Pancreas (tissue), 10 donors: ENCODE measurements at regions of chr7 and their contacts with region 1.

Region 1: DNA sequence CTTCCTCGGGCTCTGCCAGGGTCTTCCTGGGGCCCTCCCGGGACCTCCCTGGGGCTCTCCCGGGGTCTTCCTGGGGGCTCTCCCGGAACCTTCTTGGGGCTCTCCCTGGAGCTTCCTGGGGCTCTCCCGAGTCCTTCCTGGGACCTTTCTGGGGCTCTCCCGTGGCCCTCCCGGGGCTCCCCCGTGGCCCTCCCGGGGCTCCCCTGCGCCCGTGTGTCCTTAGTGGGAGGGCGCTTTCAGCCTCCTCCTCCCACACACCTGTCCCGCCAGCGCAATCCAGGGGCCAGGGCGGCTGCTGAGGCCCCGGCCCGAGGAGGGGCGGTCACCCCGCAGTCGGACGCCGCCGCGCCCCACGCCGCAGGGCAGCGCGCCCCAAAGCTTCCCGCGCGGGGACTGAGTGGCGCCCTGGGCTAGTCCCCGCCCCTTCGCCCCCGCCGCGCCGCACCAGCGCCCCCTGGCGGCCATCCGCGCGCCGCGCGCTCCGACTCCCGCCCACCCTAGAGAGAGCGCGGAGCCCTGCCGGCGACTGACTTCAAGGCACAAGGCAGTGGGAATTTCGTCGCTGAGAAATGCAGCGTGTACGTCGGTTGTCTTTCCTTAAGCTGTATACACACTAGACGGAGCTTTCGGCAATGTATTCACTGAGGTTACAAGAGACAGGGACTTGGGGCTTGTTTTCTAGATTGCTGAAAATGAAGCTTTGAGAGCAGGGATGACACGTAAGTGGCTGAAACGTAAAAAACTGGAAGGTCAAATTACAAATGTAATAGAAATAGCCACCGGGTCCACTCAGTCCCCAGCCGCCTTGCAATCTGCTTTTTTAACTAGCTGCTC is 47.1 kb downstream of the INSIG1 start:
- DNase-seq: peak; percentile 67 to 98 (median 84)
- ATAC-seq: peak; percentile 97 to 99 (median 98)
- H3K4me3 ChIP-seq: peak overlapping the region in 3 of 4 donors; percentile 38 to 55 (median 53)
- H3K27ac ChIP-seq: no peak overlapping the region
- H3K4me1 ChIP-seq: no peaks in the 10 kb centered on the region
- H3K27me3 ChIP-seq: no peaks in the 10 kb centered on the region
- CTCF ChIP-seq: peak; percentile 85 to 91 (median 88)

Region 2: DNA sequence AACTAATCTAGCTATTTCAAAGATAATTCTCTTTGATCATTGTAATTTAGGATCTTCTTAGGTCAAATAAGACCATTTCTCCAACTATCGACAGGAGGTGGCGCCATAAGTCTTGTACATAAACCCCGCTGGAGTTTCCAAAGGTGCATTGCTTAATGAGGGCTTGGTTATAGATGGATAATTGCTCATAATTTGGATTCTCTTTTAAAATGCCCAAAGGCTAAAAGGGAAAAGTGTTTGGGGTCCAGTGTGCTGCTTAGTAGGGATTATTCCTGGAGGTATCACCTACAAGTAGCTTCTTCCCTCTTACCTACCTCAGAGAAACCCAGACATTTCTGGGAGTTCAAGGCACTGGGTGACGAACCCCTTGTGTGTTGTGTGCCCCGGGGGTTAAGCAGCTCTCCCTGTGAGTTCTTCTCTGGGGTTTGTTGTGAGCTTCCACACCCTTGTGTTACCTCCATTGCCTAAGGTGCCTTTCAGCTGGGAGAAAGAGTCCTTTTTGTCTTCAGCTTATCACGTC is 417.1 kb before region 1 on chr7:
- intact Hi-C with region 1: loop called in 1 of 3 experiments (anchors 10 kb)
- DNase-seq: peak in 4 of 6 donors; percentile 61 to 80 (median 70)
- ATAC-seq: peak; percentile 82 to 94 (median 89)
- H3K4me3 ChIP-seq: peak overlapping the region; percentile 19 to 70 (median 40)
- H3K27ac ChIP-seq: peak overlapping the region; percentile 72 to 93 (median 80)
- H3K4me1 ChIP-seq: peaks cover 0 to 3% (median 0%) of the 10 kb centered on the region in 3 donors
- H3K27me3 ChIP-seq: no peaks in the 10 kb centered on the region
- CTCF ChIP-seq: peak in 2 of 4 donors; percentile 41 to 45

Region 3: DNA sequence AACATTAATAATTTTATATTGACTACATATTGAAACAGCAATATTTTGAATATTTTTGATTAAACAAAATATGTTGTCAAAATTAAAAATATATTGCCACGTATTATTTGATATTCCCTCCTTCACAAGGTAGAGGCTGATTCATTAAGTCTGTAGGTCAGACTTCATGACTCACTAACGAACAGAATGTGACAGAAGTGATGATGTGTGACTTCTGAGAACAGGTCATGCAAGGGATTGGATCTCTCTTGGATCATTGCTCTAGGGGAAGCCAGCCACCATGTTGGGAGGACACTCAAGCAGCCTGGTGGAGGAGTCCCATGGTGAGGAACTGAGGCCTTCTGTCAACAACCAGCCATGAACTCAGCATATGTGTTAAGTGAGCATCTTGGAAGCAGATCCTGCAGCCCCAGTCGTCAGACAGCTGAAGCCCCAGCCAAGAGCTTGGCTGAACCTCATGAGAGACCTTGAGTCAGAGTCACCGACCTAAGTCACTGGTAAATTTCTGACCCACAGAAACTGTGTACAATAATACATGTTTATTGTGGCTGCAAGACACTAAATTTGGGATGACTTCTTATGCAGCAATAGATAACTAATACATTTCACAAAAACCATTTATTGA is 208.1 kb before region 1 on chr7:
- intact Hi-C with region 1: no loop called
- DNase-seq: no peak
- ATAC-seq: no peak
- H3K4me3 ChIP-seq: no peak overlapping the region
- H3K27ac ChIP-seq: no peak overlapping the region
- H3K4me1 ChIP-seq: no peaks in the 10 kb centered on the region
- H3K27me3 ChIP-seq: no peaks in the 10 kb centered on the region
- CTCF ChIP-seq: no peak

Region 4: GRCh38 chr7:155190688-155191087 is 154.1 kb before region 1 on chr7:
- intact Hi-C with region 1: loop called in 2 of 3 experiments (anchors 5 kb)
- DNase-seq: peak in 4 of 6 donors; percentile 35 to 91 (median 66)
- ATAC-seq: peak; percentile 85 to 99 (median 96)
- H3K4me3 ChIP-seq: peak overlapping the region in 2 of 4 donors; percentile 30
- H3K27ac ChIP-seq: no peak overlapping the region
- H3K4me1 ChIP-seq: no peaks in the 10 kb centered on the region
- H3K27me3 ChIP-seq: no peaks in the 10 kb centered on the region
- CTCF ChIP-seq: peak; percentile 74 to 84 (median 78)